Prostate gland (tissue), 2 donors: ENCODE measurements at regions of chr15 and their contacts with region 1.

Region 1: DNA sequence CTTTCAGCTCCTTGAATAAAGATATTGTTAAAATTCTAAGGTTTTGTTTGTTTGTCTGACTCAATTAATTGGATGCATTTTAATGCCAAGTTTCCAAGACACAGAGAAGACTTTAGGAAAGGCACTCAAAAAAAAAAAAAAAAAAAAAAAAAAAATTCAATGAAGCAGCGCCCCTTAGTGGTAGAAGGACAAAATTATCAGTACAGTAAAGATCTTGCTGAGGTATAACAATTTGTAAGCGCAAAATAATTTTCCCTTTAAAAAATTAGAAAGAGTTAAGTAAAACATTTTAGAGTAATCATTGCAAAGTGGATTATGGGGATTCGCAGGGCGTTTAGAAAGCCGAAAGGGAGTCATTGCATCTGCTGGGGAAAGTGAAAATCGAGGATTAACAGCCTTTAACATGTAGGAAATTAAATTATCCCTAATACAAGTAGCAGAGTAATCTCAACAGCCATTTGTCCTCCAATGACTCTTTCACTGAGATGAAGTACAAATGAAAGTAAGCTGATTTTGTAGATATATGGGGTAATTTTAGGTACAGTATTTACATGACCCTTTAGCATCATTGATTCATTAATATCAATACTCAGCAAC is 5.8 kb upstream of the DIS3L start:
- DNase-seq: no peak
- H3K4me3 ChIP-seq: no peak overlapping the region
- H3K27ac ChIP-seq: no peak overlapping the region
- H3K4me1 ChIP-seq: no peaks in the 10 kb centered on the region
- H3K27me3 ChIP-seq: no peaks in the 10 kb centered on the region
- CTCF ChIP-seq: peak in 2 of 4 experiments; percentile 43 to 49
- POLR2A ChIP-seq: no peak

Region 2: DNA sequence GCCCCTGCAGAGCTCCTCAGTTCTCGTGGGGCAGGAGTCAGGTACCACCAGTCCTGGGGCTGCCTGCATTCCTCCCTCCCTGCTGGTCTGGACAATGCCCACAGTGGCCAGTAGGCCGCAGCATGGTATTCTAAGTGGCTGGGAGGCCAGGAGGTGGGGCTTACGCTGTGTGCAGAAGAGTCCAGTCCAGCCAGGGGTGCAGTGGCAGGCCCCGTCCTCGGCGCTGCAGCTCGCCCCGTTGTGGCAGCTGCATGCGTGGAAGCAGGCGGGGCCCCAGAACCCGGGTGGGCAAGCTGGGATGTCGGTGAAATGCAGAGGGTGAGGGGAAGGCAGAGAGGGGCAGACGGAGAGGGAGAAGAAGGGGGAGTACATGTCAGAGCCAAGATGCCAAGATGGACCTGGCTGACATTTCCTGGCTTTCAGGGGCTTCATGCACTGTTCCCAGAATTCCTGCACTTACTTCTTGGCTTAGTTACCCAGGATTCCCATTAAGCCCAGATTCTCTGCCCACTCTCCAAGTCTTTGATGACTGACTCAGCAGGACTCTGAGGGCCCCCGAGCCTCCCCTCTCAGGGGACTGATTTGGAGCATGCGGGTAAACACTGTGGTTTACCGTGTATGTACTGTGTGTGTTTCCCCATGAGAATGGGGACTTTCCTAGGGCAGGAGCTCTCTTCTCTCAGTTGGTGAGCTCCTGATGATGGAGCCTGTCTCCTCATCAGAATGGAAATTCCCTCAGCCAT is 370.7 kb before region 1 on chr15:
- intact Hi-C with region 1: loop called (anchors 5 kb)
- DNase-seq: peak; percentile 31
- H3K4me3 ChIP-seq: no peak overlapping the region
- H3K27ac ChIP-seq: no peak overlapping the region
- H3K4me1 ChIP-seq: no peaks in the 10 kb centered on the region
- H3K27me3 ChIP-seq: no peaks in the 10 kb centered on the region
- CTCF ChIP-seq: peak in 3 of 4 experiments; percentile 29 to 58 (median 51)
- POLR2A ChIP-seq: no peak